ENCODE measurements at regions of chr6 and their contacts with region 1.

Region 1: DNA sequence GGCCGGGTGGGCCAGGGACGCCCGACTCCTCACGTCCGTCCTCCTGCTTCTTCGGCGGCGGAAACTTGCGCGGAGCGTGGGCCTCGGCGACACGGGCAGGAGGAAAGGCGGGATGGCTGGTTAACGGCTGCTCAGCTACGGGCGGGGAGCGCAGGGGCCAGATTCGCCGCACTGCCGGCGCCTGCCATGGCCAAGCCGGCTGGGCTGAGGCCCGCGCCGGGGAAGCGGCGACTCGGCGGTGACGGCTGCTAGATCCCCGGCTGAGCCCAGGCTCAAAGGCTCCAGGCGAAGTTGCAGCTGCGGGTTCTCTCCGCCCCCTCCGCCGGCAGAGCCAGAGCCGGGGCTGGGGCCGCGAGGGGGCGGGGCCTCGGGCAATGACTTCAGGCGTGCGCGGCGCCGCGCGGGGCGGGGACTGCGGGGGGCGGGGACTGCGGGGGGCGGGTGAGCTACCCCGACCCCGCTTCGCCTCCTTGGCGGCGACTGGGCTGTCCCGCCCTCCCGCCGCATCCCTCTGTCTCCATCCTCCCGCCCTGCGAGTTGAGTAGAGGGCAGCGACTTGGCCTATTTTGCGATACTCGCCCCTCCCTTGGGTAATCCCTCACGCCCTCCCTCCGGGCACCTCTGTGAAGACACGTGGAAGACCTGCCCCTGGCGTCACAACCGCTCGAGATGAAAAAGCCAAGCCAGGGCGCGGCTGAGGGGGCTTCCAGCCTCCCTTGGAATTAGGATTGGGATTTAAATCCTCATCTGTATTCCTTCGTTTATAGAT is at the start of gene CEP85L:
- DNase-seq: peak; percentile 96
- total RNA-seq, gene CEP85L: 6.6 TPM

Region 2: GRCh38 chr6:118709859-118710350 is 58.4 kb after region 1 on chr6:
- intact Hi-C with region 1: loop called (anchors 2 kb)
- DNase-seq: no peak

Region 3: DNA sequence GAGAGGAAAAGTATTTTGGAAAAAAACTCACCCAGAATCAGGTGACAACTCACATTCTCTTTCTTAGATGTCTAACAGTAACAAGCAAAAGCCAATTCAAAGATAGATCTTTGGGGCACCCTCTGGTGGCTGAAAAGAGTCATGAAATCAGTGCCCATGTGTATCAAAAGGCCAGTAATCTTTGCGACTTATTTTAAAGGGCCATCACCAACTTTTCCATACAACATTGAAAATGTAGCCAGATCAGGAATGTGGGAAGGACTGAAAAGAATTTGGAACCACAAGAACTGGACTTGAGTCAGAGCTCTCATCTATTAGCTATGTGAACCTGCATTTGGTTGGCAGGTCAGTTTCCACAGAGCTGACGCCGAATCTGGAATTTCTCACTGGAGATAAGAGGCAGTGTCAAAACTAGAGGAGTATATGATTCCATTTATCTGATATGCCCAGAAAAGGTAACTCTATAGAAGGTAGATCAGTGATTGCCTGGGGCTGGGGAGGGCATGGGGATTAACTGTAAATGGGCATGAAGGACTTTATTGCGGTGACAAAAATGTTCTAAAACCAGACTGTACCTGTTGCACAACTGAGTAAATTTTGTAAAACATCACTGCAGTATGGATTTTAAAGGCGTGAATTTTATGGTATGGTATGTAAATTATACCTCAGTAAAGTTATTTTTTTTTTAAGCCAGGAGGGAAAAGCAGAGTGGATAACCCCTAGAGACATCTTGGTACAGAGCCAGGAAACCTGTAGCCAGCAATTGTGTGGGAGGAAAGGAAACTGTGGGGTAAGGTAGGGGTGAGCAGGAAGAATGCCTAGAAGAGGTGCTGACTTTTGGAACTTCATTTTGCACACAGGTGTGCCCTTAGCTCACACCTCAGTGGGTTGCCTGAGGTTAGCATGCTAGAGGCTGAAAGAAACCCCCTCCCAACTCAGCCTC is 125.4 kb after region 1 on chr6:
- intact Hi-C with region 1: loop called (anchors 5 kb)
- DNase-seq: no peak